ENCODE measurements at regions of chr14 and their contacts with region 1.

Region 1: DNA sequence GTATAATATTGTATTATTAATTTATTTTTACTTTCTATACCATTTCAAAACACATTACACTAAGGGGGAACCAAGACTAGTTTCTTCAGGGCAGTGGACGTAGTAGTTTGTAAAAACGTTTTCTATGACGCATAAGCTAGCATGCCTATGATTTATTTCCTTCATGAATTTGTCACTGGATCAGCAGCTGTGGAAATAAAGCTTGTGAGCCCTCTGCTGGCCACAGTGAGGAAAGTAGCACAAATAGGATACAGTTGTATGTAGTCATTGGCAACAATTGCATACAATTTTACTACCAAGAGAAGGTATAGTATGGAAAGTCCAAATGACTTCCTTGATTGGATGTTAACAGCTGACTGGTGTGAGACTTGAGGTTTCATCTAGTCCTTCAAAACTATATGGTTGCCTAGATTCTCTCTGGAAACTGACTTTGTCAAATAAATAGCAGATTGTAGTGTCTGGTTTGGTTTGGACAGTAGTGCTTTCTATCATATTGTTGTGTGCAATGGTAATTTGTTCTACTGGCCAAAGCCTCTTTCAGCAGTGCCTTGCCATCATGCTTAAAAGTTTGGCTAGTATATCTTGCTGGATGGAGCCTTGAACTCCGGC is 24.3 kb upstream of the PLEKHD1 start:
- DNase-seq: peak; percentile 87
- H3K4me3 Mint-ChIP-seq: no peak overlapping the region
- H3K27ac Mint-ChIP-seq: no peak overlapping the region
- H3K4me1 Mint-ChIP-seq: no peaks in the 10 kb centered on the region
- H3K27me3 Mint-ChIP-seq: no peaks in the 10 kb centered on the region

Region 2: GRCh38 chr14:69129264-69129880 is 330.8 kb before region 1 on chr14:
- intact Hi-C with region 1: loop called (anchors 5 kb)
- DNase-seq: peak; percentile 89
- H3K4me3 Mint-ChIP-seq: no peak overlapping the region
- H3K27ac Mint-ChIP-seq: no peak overlapping the region
- H3K4me1 Mint-ChIP-seq: peaks cover 26% of the 10 kb centered on the region
- H3K27me3 Mint-ChIP-seq: no peaks in the 10 kb centered on the region

Region 3: DNA sequence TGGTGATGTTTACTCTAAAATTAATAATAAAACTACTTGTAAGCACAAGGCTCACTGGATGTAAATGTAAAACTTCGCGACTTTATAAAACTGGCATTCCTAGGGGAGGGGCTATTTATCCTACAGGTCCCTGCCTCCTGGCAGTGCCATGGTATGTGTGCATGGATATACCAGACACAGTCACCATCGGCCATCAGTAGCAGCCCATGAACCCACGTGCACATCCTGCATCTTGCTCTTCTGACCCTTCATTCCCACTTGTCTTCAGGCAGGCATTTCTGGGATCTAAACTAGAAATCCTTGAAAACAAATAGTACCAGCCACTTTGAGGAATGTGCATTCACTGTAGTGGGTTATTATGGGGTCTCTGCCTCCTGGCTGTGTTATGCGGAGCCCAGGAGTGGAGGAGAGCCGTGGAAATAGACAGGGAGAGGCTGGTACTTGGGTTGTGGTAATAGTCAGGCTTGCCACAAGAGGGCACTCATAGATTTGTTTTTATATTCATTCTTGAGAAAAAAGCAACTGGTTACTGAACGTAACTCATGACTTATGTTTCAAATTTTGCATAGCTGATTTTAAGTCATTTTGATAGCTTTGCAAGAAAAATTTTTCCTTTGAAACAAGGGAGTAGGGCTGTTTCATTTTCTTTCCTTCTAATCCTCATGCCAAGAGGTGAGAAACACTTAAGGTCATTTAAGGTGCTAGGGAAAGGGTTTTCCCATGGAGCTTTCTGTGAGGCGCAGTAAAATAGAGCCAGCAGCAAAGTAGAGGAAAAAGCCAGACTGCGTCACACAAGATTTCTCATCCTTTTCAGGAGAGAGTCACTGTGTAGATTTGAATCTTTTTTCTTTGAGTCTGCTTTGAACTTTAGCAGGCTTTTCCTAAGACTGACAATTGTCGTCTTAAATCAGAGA is 217.6 kb before region 1 on chr14:
- intact Hi-C with region 1: loop called (anchors 1 kb)
- DNase-seq: peak; percentile 85
- H3K4me3 Mint-ChIP-seq: no peak overlapping the region
- H3K27ac Mint-ChIP-seq: no peak overlapping the region
- H3K4me1 Mint-ChIP-seq: no peaks in the 10 kb centered on the region
- H3K27me3 Mint-ChIP-seq: peaks cover 1% of the 10 kb centered on the region

Region 4: GRCh38 chr14:69260861-69261564 is 199.2 kb before region 1 on chr14:
- intact Hi-C with region 1: loop called (anchors 1 kb)
- DNase-seq: peak; percentile 82
- H3K4me3 Mint-ChIP-seq: peak overlapping the region; percentile 79
- H3K27ac Mint-ChIP-seq: no peak overlapping the region
- H3K4me1 Mint-ChIP-seq: peaks cover 4% of the 10 kb centered on the region
- H3K27me3 Mint-ChIP-seq: peaks cover 68% of the 10 kb centered on the region

Region 5: DNA sequence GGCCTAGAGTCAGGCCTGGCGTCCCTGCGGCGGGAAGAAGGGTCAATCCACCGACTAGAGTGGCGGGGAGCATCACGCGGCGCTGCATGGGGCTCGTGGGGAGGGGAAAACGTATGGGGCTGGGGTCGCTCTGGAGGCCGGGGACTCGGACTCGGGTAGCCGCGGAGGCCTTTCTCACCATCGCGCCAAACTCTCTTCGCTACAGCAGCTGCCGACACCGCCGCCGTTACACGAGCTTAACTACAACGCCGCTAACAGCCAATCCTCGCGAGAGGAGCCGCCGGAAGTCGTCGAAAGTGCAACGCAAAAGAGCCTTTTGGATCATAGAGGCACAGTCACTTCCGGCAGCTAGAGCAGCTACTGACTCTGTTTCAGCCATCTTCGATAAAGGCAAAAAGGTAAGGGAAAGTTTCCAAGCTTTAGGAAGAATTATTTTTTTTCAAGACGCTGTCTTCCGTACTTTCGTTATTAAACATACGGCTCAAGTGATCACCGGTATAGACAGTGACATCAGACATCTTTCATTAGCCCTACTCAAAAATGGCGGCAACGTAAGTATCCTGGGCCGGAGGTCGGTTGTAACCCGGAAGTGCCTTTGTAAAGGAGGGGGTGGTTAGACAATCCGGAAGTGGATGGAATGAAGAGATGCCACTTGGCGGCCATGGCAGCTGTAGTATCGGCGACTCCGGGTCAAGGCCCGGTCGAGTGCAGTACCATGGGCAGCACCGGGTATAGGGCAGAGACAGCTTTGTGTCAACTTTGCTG is 62.0 kb before region 1 on chr14 and contains the starts of genes ERH and SLC39A9:
- intact Hi-C with region 1: loop called (anchors 5 kb)
- DNase-seq: peak; percentile 98
- H3K4me3 Mint-ChIP-seq: peak within 1 kb of the TSS; percentile 94
- H3K27ac Mint-ChIP-seq: peak within 1 kb of the TSS; percentile 98
- H3K4me1 Mint-ChIP-seq: peaks cover 49% of the 10 kb centered on the region
- H3K27me3 Mint-ChIP-seq: no peaks in the 10 kb centered on the region
- total RNA-seq, gene ERH: 434 and 441 TPM in 2 replicates
- total RNA-seq, gene SLC39A9: 49.5 and 53.4 TPM in 2 replicates